IMR-90 (cell line): ENCODE measurements at regions of chr6 and their contacts with region 1.

Region 1: GRCh38 chr6:121652726-121653623 is 217.5 kb downstream of the GJA1 start:
- DNase-seq: peak; percentile 91
- ATAC-seq: peak; percentile 80
- H3K4me3 ChIP-seq: no peak overlapping the region
- H3K27ac ChIP-seq: no peak overlapping the region
- H3K4me1 ChIP-seq: peaks cover 6% of the 10 kb centered on the region
- H3K27me3 ChIP-seq: no peaks in the 10 kb centered on the region
- CTCF ChIP-seq: no peak
- POLR2A ChIP-seq: no peak
- RAD21 ChIP-seq: no peak

Region 2: GRCh38 chr6:121666814-121667213 is 13.8 kb after region 1 on chr6:
- CTCF ChIA-PET with region 1: interaction called, 7 read pairs
- POLR2A ChIA-PET with region 1: no interaction called
- dilution Hi-C with region 1: no loop called
- in situ Hi-C with region 1: no loop called
- intact Hi-C with region 1: loop called (anchors 2 kb)
- DNase-seq: peak; percentile 93
- ATAC-seq: peak; percentile 85
- H3K4me3 ChIP-seq: no peak overlapping the region
- H3K27ac ChIP-seq: no peak overlapping the region
- H3K4me1 ChIP-seq: peaks cover 9% of the 10 kb centered on the region
- H3K27me3 ChIP-seq: no peaks in the 10 kb centered on the region
- CTCF ChIP-seq: no peak
- POLR2A ChIP-seq: no peak
- RAD21 ChIP-seq: no peak

Region 3: DNA sequence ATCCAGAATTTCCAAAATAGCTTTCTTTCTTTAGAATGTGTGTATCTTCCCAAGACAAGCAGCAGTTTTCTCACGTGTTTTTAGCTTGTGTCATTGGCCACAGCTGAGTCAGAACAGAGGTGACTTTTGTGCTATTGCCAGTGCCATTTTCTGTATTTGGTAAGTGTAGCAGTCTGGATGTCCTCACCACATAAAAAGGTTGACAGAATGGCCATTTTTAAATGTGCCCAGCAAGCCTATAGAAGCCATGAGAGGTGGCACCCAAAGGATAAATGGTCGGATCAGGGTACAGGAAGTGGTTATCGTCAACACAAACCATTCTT is 477.0 kb after region 1 on chr6:
- CTCF ChIA-PET with region 1: no interaction called
- POLR2A ChIA-PET with region 1: no interaction called
- dilution Hi-C with region 1: no loop called
- in situ Hi-C with region 1: no loop called
- intact Hi-C with region 1: no loop called
- DNase-seq: no peak
- ATAC-seq: no peak
- H3K4me3 ChIP-seq: no peak overlapping the region
- H3K27ac ChIP-seq: no peak overlapping the region
- H3K4me1 ChIP-seq: no peaks in the 10 kb centered on the region
- H3K27me3 ChIP-seq: no peaks in the 10 kb centered on the region
- CTCF ChIP-seq: no peak
- POLR2A ChIP-seq: no peak
- RAD21 ChIP-seq: no peak